GM18951 (cell line): ENCODE measurements at regions of chr4 and their contacts with region 1.

Region 1: DNA sequence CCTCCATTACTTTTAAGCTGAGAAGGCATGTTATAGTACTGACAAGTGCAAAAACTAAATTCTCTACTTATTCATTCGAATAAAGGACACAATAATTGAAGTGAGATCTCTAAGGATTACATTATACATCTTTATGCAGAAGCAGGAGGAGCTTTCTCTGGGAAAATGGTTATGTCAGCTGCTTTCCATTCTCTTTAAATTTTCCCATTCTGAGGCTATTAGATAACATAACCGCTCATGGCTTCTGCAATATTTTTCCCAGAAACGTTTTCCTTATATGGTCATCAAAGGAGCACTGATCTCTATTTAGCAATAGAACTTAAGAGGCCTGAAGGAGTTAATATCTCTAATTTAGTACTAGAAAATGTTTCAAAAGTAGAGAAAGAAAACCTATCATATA is 221.6 kb downstream of the NSUN7 start:
- POLR2A ChIP-seq: no peak

Region 2: DNA sequence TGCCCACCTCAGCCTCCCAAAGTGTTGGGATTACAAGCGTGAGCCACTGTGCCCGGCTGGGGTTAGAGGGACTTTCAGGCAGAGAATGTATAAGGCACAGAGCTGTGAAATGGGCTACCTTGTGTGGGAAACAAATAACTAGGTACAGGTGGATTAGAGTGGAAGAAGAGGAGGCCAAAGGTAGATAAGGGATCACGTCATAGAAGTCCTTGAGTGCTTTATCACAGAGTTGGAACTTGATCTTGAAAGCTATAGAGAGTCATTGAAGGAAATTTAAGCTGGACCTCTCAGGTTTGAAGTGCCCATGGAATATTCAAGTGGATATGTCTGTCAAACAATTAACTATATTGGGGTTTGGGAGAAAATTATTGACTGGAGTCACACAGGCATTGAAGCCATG is 906.3 kb before region 1 on chr4:
- in situ Hi-C with region 1: no loop called
- POLR2A ChIP-seq: no peak

Region 3: DNA sequence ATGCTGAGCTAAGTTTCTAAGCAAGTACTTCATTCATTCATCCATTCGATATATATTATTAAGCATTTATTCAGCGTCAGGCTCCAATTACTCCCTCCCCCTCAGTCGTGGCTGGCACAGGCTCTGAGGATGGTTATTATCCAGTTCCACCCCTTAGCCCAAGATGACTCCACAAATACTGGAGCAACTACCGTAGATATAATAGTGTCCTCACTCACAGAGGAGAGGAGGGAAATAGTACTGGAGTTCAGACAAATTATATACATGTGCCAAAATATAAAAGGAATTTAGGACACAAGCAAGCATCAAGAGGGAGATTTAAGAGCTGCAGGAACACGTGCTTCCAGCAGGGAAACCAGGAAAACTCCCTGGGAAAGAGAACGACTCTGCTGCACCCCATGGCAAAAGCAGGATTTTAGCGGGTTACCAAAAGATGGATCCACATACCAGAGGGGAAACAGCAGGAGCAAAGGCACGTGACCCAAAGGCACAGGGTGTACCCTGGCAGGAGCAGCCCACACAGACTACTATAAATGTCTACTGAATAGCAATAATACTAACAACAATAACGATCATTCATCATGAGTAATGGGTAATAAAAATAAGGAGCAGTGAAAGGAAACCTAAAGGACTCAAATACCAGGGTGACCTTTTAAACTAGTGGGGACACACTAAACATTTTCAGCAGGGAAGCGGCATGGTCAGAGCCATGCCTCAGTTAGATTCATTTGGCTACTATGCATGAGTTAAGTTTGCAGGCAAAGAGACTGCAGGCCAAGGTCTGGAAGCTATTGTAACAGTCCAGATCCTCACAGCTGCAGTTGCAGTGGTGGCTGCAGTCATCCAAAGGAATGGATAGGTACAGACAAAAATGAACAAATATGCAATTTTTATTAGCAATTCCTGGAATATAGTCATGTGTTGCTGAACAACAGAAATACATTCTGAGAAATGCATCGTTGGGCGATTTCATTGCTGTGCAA is 89.3 kb after region 1 on chr4:
- in situ Hi-C with region 1: no loop called
- POLR2A ChIP-seq: no peak

Region 4: GRCh38 chr4:41216294-41217019 is 245.1 kb after region 1 on chr4:
- in situ Hi-C with region 1: loop called (anchors 5 kb)
- POLR2A ChIP-seq: peak; percentile 80